ENCODE measurements at regions of chr9 and their contacts with region 1.

Region 1: GRCh38 chr9:130770679-130771442 is 64.2 kb upstream of the ABL1 start:
- DNase-seq: no peak
- ATAC-seq: peak; percentile 78

Region 2: GRCh38 chr9:130712564-130713285 is 58.1 kb before region 1 on chr9:
- intact Hi-C with region 1: loop called (anchors 10 kb)
- DNase-seq: peak; percentile 98
- ATAC-seq: peak; percentile 99

Region 3: DNA sequence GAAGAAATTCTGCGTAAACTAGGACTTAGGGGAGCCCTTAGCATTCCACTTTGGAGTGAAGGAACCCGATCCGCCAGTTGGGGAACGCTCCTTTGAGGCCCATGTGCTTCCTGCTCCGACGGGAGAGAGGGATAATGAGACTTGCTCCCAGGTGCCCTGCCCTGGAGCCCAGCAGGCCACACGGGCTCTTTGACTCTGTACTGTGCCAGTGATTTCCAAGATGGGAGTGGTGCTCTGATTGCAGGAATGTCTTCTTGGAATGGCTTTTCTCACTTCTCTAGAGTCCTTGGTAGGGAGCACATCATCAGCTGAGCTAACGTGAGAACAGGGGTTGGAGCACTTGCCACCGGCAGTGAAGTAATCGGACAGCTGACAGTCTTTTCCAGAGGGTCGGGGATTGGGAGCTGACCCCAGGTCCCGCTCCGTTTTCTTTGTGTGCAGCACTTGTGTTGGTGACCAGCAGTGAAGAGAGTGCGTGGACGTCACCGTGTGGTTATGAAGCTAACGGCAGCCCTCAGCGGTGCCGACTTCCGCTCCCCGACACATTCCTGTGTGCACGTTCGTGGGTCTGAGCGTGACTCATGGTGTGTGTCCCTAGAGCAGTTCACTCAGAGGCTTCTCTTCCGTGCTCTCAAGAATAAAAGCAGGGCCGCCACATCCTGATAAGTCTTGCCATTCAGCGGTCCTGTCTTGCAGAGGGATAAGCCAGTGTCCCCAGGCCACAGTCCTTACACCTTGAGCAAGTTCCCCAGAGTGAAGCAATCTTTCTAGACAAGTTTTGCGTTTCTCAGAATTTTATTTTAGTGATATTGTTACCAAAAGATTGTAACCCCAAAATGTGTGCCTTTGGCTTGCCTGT is 89.8 kb after region 1 on chr9:
- intact Hi-C with region 1: loop called (anchors 5 kb)
- DNase-seq: peak; percentile 87
- ATAC-seq: peak; percentile 93